Natural killer cell (primary cell): ENCODE measurements at regions of chr9 and their contacts with region 1.

Region 1: GRCh38 chr9:108850293-108850897 is 5.4 kb downstream of the ACTL7B start:
- DNase-seq: no peak
- ATAC-seq: no peak
- H3K4me3 ChIP-seq: no peak overlapping the region
- H3K4me3 Mint-ChIP-seq: no peak overlapping the region
- H3K27ac ChIP-seq: no peak overlapping the region
- H3K27ac Mint-ChIP-seq: no peak overlapping the region
- H3K4me1 ChIP-seq: no peaks in the 10 kb centered on the region
- H3K4me1 Mint-ChIP-seq: no peaks in the 10 kb centered on the region
- H3K27me3 ChIP-seq: no peaks in the 10 kb centered on the region
- H3K27me3 Mint-ChIP-seq: peaks cover 0 to 9% of the 10 kb centered on the region in 2 donors
- CTCF ChIP-seq: no peak

Region 2: DNA sequence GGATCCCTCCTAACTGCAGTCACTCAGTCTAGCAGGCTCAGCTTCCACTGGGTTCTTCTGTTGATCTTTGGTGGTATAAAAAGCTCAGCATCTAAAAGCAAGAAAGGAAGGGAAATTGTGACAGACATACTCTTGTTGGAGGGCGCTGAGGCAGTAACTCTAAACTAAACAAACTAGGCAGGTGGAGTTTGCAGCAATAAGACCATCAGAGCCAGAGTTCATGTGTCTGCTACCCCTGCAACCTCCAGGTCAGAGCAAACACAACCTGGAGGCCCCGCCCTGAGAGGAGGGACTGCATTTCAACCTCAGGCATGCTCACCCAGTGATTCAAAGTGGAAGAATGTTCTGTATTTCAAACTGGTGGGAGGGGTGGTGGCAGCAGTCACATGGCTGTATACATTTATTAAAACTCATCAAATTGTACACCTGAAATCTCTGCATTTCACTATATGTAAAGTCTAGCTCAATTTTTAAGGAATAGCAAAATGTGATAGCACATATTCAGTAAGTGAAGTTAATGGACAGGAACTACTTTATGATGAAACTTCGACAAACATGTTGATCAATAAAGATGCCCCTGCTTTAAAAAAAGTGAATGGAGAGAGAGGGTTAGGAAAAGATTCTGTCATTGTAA is 18.8 kb after region 1 on chr9:
- intact Hi-C with region 1: loop called (anchors 2 kb)
- DNase-seq: no peak
- ATAC-seq: no peak
- H3K4me3 ChIP-seq: no peak overlapping the region
- H3K4me3 Mint-ChIP-seq: no peak overlapping the region
- H3K27ac ChIP-seq: no peak overlapping the region
- H3K27ac Mint-ChIP-seq: no peak overlapping the region
- H3K4me1 ChIP-seq: no peaks in the 10 kb centered on the region
- H3K4me1 Mint-ChIP-seq: peaks cover 0 to 5% of the 10 kb centered on the region in 2 donors
- H3K27me3 ChIP-seq: no peaks in the 10 kb centered on the region
- H3K27me3 Mint-ChIP-seq: no peaks in the 10 kb centered on the region
- CTCF ChIP-seq: no peak